Activated CD8-positive, alpha-beta T cell treated with anti-CD3 and anti-CD28 coated beads for 36 hours (primary cell): ENCODE measurements at regions of chr11 and their contacts with region 1.

Region 1: GRCh38 chr11:61384271-61385242 is 7.8 kb upstream of the TMEM216 start:
- DNase-seq: no peak
- ATAC-seq: no peak
- H3K4me3 Mint-ChIP-seq: no peak overlapping the region
- H3K27ac Mint-ChIP-seq: no peak overlapping the region
- H3K4me1 Mint-ChIP-seq: peaks cover 4% of the 10 kb centered on the region
- H3K27me3 Mint-ChIP-seq: no peaks in the 10 kb centered on the region
- CTCF ChIP-seq: no peak

Region 2: DNA sequence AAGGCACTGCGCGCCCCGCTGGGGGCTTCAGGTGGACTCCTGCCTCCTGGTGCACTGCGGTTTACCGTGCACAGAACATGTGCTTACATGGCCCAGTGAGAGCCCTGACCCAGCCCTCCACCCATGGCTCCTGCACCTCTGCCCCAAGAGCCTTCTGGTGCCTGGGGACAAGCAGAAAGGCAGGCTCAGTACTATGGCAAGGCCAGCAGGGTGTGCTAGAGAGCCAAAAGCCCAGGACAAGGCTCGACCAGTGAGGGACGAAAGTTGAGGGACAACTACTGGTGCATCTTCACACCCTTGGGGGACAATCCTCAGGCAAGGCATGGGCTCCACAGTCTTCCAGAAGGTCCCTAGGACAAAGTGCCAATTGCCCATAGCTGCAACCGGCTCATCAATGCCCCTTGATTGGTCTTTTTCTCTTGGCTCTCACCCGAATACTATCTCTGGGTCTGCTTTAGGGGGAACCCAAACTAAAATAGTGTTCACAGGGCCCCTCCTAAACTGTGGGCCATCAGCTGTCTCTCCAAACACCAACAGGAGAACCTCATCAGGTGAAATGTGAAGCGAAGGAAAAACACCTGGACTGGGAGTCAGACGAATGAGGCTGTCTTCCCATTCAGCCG is 130.0 kb before region 1 on chr11:
- CTCF ChIA-PET with region 1: interaction called, 30 read pairs
- POLR2A ChIA-PET with region 1: interaction called, 3 read pairs
- intact Hi-C with region 1: loop called (anchors 10 kb)
- DNase-seq: peak; percentile 73
- ATAC-seq: peak; percentile 98
- H3K4me3 Mint-ChIP-seq: no peak overlapping the region
- H3K27ac Mint-ChIP-seq: no peak overlapping the region
- H3K4me1 Mint-ChIP-seq: no peaks in the 10 kb centered on the region
- H3K27me3 Mint-ChIP-seq: no peaks in the 10 kb centered on the region
- CTCF ChIP-seq: peak; percentile 90

Region 3: GRCh38 chr11:61309739-61310138 is 74.8 kb before region 1 on chr11:
- CTCF ChIA-PET with region 1: interaction called, 14 read pairs
- POLR2A ChIA-PET with region 1: no interaction called
- intact Hi-C with region 1: no loop called
- DNase-seq: peak; percentile 28
- ATAC-seq: peak; percentile 83
- H3K4me3 Mint-ChIP-seq: no peak overlapping the region
- H3K27ac Mint-ChIP-seq: peak overlapping the region; percentile 19
- H3K4me1 Mint-ChIP-seq: no peaks in the 10 kb centered on the region
- H3K27me3 Mint-ChIP-seq: no peaks in the 10 kb centered on the region
- CTCF ChIP-seq: no peak

Region 4: GRCh38 chr11:61332797-61333549 is 51.6 kb before region 1 on chr11 and contains the starts of genes DDB1 and TKFC:
- CTCF ChIA-PET with region 1: interaction called, 313 read pairs
- POLR2A ChIA-PET with region 1: interaction called, 12 read pairs
- intact Hi-C with region 1: loop called (anchors 1 kb)
- DNase-seq: peak; percentile 98
- ATAC-seq: peak; percentile 94
- H3K4me3 Mint-ChIP-seq: peak within 1 kb of the TSS; percentile 86
- H3K27ac Mint-ChIP-seq: peak within 1 kb of the TSS; percentile 96
- H3K4me1 Mint-ChIP-seq: peaks cover 66% of the 10 kb centered on the region
- H3K27me3 Mint-ChIP-seq: no peaks in the 10 kb centered on the region
- CTCF ChIP-seq: no peak
- total RNA-seq, gene DDB1: 269 to 270 TPM
- total RNA-seq, gene TKFC: 79.1 to 86.3 TPM

Region 5: GRCh38 chr11:61347916-61348461 is 36.6 kb before region 1 on chr11:
- CTCF ChIA-PET with region 1: interaction called, 16 read pairs
- POLR2A ChIA-PET with region 1: interaction called, 3 read pairs
- intact Hi-C with region 1: no loop called
- DNase-seq: no peak
- ATAC-seq: no peak
- H3K4me3 Mint-ChIP-seq: no peak overlapping the region
- H3K27ac Mint-ChIP-seq: no peak overlapping the region
- H3K4me1 Mint-ChIP-seq: no peaks in the 10 kb centered on the region
- H3K27me3 Mint-ChIP-seq: no peaks in the 10 kb centered on the region
- CTCF ChIP-seq: no peak

Region 6: GRCh38 chr11:61369372-61370219 is 15.0 kb before region 1 on chr11:
- CTCF ChIA-PET with region 1: interaction called, 86 read pairs
- POLR2A ChIA-PET with region 1: interaction called, 5 read pairs
- intact Hi-C with region 1: no loop called
- DNase-seq: no peak
- ATAC-seq: peak; percentile 13
- H3K4me3 Mint-ChIP-seq: no peak overlapping the region
- H3K27ac Mint-ChIP-seq: peak overlapping the region; percentile 63
- H3K4me1 Mint-ChIP-seq: peaks cover 15% of the 10 kb centered on the region
- H3K27me3 Mint-ChIP-seq: no peaks in the 10 kb centered on the region
- CTCF ChIP-seq: no peak

Region 7: DNA sequence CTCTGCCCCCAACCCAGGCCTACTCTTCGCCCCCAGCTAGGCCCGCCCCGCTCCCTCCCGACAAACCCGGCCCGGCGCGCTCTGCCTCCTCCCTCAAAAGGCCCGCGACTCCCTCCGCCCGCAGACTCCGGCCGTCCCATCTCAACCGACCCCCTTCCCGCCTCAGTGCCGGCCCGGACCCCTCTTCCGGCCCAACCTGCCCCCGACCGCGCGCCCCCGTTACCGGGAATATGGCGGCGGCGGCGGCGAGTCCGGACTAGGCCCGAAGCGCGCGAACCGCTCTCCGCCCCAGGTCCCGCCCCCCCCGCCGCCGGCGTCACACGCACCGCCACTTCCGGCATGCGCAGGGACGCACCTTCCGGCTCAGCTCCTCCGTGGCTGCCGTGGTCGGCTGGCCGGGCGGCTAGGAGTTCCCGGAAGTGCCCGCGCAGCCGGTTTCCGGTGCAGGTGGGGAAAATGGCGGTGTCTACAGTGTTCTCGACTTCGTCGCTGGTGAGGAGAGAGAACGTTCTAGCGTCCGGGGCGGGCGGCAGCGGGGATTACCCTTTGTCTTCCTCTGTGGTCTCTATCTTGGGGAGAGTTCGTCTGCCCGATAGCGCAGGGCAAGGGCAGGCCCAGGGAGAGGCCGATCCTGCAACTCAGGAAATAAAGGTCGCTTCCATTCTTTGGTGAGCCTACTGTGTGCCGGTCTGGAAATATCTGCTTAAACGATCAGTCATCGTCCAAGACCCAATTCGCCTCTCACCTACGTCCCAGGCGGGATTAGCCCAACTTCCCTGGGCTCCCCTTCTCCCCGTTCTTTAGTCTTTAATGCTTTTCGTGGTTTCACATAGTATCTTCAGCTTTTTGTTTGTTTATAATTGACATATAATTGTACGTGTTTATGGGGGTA is 45.4 kb after region 1 on chr11 and contains the starts of genes CPSF7 and SDHAF2:
- CTCF ChIA-PET with region 1: interaction called, 17 read pairs
- POLR2A ChIA-PET with region 1: interaction called, 3 read pairs
- intact Hi-C with region 1: no loop called
- DNase-seq: peak; percentile 98
- ATAC-seq: peak; percentile 91
- H3K4me3 Mint-ChIP-seq: peak within 1 kb of the TSS; percentile 98
- H3K27ac Mint-ChIP-seq: peak within 1 kb of the TSS; percentile 99
- H3K4me1 Mint-ChIP-seq: peaks cover 57% of the 10 kb centered on the region
- H3K27me3 Mint-ChIP-seq: no peaks in the 10 kb centered on the region
- CTCF ChIP-seq: no peak
- total RNA-seq, gene CPSF7: 98.5 to 105 TPM
- total RNA-seq, gene SDHAF2: 33.6 to 35.3 TPM